Uterus (tissue), 4 donors: ENCODE measurements at regions of chr1 and their contacts with region 1.

Region 1: GRCh38 chr1:110106013-110106941 is 6.0 kb upstream of the UBL4B start:
- DNase-seq: peak; percentile 62 to 73
- H3K4me3 ChIP-seq: no peak overlapping the region
- H3K27ac ChIP-seq: no peak overlapping the region
- H3K4me1 ChIP-seq: no peaks in the 10 kb centered on the region
- H3K27me3 ChIP-seq: no peaks in the 10 kb centered on the region
- CTCF ChIP-seq: peak; percentile 87 to 92 (median 89)
- POLR2A ChIP-seq: no peak

Region 2: DNA sequence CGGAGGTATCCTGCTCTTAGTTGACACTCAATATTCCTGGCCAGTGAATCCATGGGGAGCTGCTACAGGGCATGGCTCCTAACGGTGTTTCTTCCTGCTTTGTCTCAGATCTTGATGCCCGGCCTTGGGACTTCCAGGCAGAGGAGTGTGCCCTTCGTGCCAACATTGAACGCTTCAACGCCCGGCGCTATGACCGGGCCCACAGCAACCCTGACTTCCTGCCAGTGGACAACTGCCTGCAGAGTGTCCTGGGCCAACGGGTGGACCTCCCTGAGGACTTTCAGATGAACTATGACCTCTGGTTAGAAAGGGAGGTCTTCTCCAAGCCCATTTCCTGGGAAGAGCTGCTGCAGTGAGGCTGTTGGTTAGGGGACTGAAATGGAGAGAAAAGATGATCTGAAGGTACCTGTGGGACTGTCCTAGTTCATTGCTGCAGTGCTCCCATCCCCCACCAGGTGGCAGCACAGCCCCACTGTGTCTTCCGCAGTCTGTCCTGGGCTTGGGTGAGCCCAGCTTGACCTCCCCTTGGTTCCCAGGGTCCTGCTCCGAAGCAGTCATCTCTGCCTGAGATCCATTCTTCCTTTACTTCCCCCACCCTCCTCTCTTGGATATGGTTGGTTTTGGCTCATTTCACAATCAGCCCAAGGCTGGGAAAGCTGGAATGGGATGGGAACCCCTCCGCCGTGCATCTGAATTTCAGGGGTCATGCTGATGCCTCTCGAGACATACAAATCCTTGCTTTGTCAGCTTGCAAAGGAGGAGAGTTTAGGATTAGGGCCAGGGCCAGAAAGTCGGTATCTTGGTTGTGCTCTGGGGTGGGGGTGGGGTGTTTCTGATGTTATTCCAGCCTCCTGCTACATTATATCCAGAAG is 52.5 kb before region 1 on chr1:
- intact Hi-C with region 1: loop called (anchors 5 kb)
- DNase-seq: peak; percentile 70 to 78
- H3K4me3 ChIP-seq: no peak overlapping the region
- H3K27ac ChIP-seq: no peak overlapping the region
- H3K4me1 ChIP-seq: peaks cover 0 to 3% of the 10 kb centered on the region in 2 donors
- H3K27me3 ChIP-seq: no peaks in the 10 kb centered on the region
- CTCF ChIP-seq: peak; percentile 83 to 96 (median 85)
- POLR2A ChIP-seq: no peak